ENCODE measurements at regions of chr18 and their contacts with region 1.

Region 1: GRCh38 chr18:60554967-60555366 is 182.4 kb upstream of the MC4R start:
- DNase-seq: no peak
- ATAC-seq: no peak
- H3K4me3 ChIP-seq: no peak overlapping the region
- H3K27ac ChIP-seq: no peak overlapping the region
- H3K4me1 ChIP-seq: no peaks in the 10 kb centered on the region
- H3K27me3 ChIP-seq: no peaks in the 10 kb centered on the region
- CTCF ChIP-seq: no peak
- POLR2A ChIP-seq: no peak

Region 2: GRCh38 chr18:59837586-59837985 is 717.4 kb before region 1 on chr18:
- intact Hi-C with region 1: loop called in 1 of 2 experiments (anchors 10 kb)
- DNase-seq: no peak
- ATAC-seq: peak; percentile 79 to 93 (median 84)
- H3K4me3 ChIP-seq: no peak overlapping the region
- H3K27ac ChIP-seq: no peak overlapping the region
- H3K4me1 ChIP-seq: no peaks in the 10 kb centered on the region
- H3K27me3 ChIP-seq: no peaks in the 10 kb centered on the region
- CTCF ChIP-seq: peak; percentile 75 to 90 (median 86)
- POLR2A ChIP-seq: no peak

Region 3: GRCh38 chr18:59988098-59988706 is 566.8 kb before region 1 on chr18:
- intact Hi-C with region 1: loop called in 1 of 2 experiments (anchors 10 kb)
- DNase-seq: no peak
- ATAC-seq: peak; percentile 70 to 79 (median 72)
- H3K4me3 ChIP-seq: no peak overlapping the region
- H3K27ac ChIP-seq: no peak overlapping the region
- H3K4me1 ChIP-seq: no peaks in the 10 kb centered on the region
- H3K27me3 ChIP-seq: no peaks in the 10 kb centered on the region
- CTCF ChIP-seq: peak; percentile 87 to 92 (median 91)
- POLR2A ChIP-seq: no peak

Measured in right lobe of liver (tissue), 6 donors.